Activated naive CD4-positive, alpha-beta T cell treated with anti-CD3 and anti-CD28 coated beads for 36 hours (primary cell): ENCODE measurements at regions of chr15 and their contacts with region 1.

Region 1: GRCh38 chr15:33086507-33087121 is 107.9 kb downstream of the FMN1 start:
- DNase-seq: no peak
- H3K4me3 Mint-ChIP-seq: no peak overlapping the region
- H3K27ac Mint-ChIP-seq: no peak overlapping the region
- H3K4me1 Mint-ChIP-seq: no peaks in the 10 kb centered on the region
- H3K27me3 Mint-ChIP-seq: no peaks in the 10 kb centered on the region

Region 2: GRCh38 chr15:32952901-32953532 is 133.6 kb before region 1 on chr15:
- CTCF ChIA-PET with region 1: no interaction called
- intact Hi-C with region 1: no loop called
- DNase-seq: no peak
- H3K4me3 Mint-ChIP-seq: no peak overlapping the region
- H3K27ac Mint-ChIP-seq: no peak overlapping the region
- H3K4me1 Mint-ChIP-seq: no peaks in the 10 kb centered on the region
- H3K27me3 Mint-ChIP-seq: peaks cover 8% of the 10 kb centered on the region

Region 3: GRCh38 chr15:33126559-33127290 is 40.1 kb after region 1 on chr15:
- CTCF ChIA-PET with region 1: interaction called, 34 read pairs
- intact Hi-C with region 1: loop called (anchors 2 kb)
- DNase-seq: peak; percentile 77
- H3K4me3 Mint-ChIP-seq: no peak overlapping the region
- H3K27ac Mint-ChIP-seq: no peak overlapping the region
- H3K4me1 Mint-ChIP-seq: peaks cover 17% of the 10 kb centered on the region
- H3K27me3 Mint-ChIP-seq: no peaks in the 10 kb centered on the region

Region 4: DNA sequence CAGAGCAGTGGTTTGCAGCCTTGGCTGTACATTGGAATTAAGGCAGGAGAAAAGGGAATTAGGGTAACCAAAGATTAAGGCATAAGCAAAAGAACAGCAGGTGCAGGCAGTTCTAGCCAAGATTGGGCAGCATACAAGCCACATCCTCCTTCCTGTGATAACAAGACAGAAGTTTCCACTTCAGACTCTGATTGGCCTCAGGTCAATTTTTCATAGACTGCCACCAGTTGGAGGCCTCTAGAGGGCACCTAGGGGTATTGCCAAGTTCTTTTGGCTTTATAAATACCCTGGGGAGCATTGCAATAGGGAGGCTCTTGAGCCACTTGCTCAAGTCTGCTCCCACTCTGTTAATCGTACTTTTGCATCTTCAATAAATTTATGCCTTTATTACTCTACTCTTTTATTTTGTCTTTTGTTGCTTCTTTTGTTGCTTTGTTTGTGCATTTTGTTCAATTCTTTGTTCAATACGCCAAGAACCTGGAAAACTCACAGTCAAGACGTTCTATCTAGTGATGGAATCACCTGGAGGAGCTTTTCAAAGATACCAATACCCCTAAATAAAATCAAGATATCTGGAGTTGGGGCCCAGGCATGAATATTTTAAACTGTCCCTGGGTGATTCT is 140.1 kb after region 1 on chr15:
- CTCF ChIA-PET with region 1: no interaction called
- intact Hi-C with region 1: loop called (anchors 5 kb)
- DNase-seq: peak; percentile 72
- H3K4me3 Mint-ChIP-seq: no peak overlapping the region
- H3K27ac Mint-ChIP-seq: no peak overlapping the region
- H3K4me1 Mint-ChIP-seq: peaks cover 12% of the 10 kb centered on the region
- H3K27me3 Mint-ChIP-seq: no peaks in the 10 kb centered on the region

Region 5: DNA sequence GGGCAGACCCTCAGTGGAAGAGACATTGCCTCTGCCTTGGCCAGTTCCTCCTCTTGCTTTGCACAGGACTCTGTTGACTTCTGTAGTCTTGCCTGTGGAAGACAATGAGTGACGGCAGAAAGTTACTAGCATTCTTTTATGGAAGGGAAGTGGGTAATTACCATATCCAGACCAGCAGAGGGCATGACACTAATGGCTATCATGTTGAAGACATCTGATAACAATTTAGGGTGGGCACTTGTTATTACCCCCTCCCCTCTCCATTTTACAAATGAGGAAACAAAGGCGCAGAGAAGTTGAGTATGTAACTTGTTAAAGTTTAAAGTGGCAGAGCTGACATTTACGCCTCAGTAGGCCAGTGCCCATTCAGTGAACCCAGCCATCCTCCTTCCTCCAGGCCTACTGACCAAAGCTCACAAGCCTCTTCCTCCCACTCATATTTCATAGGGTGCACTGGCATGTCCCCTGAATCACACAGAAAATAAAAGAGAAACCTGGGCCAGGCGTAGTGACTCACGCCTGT is 156.1 kb after region 1 on chr15:
- CTCF ChIA-PET with region 1: no interaction called
- intact Hi-C with region 1: no loop called
- DNase-seq: no peak
- H3K4me3 Mint-ChIP-seq: no peak overlapping the region
- H3K27ac Mint-ChIP-seq: no peak overlapping the region
- H3K4me1 Mint-ChIP-seq: peaks cover 11% of the 10 kb centered on the region
- H3K27me3 Mint-ChIP-seq: no peaks in the 10 kb centered on the region

Region 6: DNA sequence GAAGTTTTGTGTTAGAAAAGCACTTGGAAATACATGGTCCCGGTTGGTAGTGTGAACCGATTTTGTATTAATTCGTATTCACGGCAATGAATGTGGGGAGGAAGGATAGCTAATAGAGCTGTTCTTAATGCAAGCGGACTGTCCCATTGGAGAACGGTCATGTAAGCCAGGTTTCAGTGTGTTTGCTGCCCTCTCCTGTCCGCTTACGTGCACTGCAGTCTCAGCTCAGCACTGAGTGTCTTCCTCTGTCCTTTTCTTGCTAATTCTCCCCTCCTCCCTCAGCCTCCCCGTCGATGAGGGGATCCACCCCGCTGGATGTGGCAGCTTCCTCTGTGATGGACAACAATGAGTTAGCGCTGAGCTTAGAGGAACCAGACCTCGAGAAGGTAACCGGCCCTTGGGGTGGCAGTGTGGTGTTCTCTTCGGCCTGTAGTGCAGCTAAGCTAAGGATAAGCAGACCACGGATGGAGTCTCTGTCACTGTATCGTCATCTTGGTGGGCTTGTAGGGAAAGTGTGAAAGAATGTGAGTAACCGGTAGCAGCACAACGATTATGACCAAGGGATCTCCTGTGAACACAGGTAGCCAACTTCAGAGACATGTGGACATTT is 614.2 kb after region 1 on chr15:
- CTCF ChIA-PET with region 1: interaction called, 6 read pairs
- intact Hi-C with region 1: loop called (anchors 1 kb)
- DNase-seq: peak; percentile 76
- H3K4me3 Mint-ChIP-seq: no peak overlapping the region
- H3K27ac Mint-ChIP-seq: no peak overlapping the region
- H3K4me1 Mint-ChIP-seq: no peaks in the 10 kb centered on the region
- H3K27me3 Mint-ChIP-seq: peaks cover 10% of the 10 kb centered on the region

Region 7: GRCh38 chr15:33963831-33964664 is 877.4 kb after region 1 on chr15:
- CTCF ChIA-PET with region 1: no interaction called
- intact Hi-C with region 1: loop called (anchors 5 kb)
- DNase-seq: no peak
- H3K4me3 Mint-ChIP-seq: no peak overlapping the region
- H3K27ac Mint-ChIP-seq: no peak overlapping the region
- H3K4me1 Mint-ChIP-seq: no peaks in the 10 kb centered on the region
- H3K27me3 Mint-ChIP-seq: no peaks in the 10 kb centered on the region